ENCODE measurements at regions of chr4 and their contacts with region 1.

Region 1: GRCh38 chr4:74117024-74117534 is 18.1 kb upstream of the CXCL2 start:
- DNase-seq: peak; percentile 96
- H3K4me3 Mint-ChIP-seq: peak overlapping the region; percentile 88
- H3K27ac Mint-ChIP-seq: peak overlapping the region; percentile 99
- H3K4me1 Mint-ChIP-seq: peaks cover 44% of the 10 kb centered on the region
- H3K27me3 Mint-ChIP-seq: no peaks in the 10 kb centered on the region
- CTCF ChIP-seq: no peak

Region 2: DNA sequence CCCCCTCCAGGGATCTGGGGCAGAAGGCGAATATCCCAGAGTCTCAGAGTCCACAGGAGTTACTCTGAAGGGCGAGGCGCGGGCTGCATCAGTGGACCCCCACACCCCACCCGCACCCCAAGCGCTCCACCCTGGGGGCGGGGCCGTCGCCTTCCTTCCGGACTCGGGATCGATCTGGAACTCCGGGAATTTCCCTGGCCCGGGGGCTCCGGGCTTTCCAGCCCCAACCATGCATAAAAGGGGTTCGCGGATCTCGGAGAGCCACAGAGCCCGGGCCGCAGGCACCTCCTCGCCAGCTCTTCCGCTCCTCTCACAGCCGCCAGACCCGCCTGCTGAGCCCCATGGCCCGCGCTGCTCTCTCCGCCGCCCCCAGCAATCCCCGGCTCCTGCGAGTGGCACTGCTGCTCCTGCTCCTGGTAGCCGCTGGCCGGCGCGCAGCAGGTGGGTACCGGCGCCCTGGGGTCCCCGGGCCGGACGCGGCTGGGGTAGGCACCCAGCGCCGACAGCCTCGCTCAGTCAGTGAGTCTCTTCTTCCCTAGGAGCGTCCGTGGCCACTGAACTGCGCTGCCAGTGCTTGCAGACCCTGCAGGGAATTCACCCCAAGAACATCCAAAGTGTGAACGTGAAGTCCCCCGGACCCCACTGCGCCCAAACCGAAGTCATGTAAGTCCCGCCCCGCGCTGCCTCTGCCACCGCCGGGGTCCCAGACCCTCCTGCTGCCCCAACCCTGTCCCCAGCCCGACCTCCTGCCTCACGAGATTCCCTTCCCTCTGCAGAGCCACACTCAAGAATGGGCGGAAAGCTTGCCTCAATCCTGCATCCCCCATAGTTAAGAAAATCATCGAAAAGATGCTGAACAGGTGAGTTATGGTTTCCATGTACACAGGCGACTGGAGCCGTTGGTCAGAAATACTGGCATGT is 247.7 kb before region 1 on chr4 and contains the start of gene CXCL1:
- CTCF ChIA-PET with region 1: interaction called, 11 read pairs
- POLR2A ChIA-PET with region 1: interaction called, 32 read pairs
- intact Hi-C with region 1: loop called (anchors 5 kb)
- DNase-seq: peak; percentile 74
- H3K4me3 Mint-ChIP-seq: peak within 1 kb of the TSS; percentile 95
- H3K27ac Mint-ChIP-seq: peak within 1 kb of the TSS; percentile 92
- H3K4me1 Mint-ChIP-seq: peaks cover 37% of the 10 kb centered on the region
- H3K27me3 Mint-ChIP-seq: no peaks in the 10 kb centered on the region
- CTCF ChIP-seq: no peak
- total RNA-seq, gene CXCL1: 35.0 and 49.3 TPM in 2 replicates

Region 3: GRCh38 chr4:74056858-74057562 is 60.1 kb before region 1 on chr4:
- CTCF ChIA-PET with region 1: interaction called, 3 read pairs
- POLR2A ChIA-PET with region 1: interaction called, 13 read pairs
- intact Hi-C with region 1: loop called (anchors 5 kb)
- DNase-seq: peak; percentile 70
- H3K4me3 Mint-ChIP-seq: no peak overlapping the region
- H3K27ac Mint-ChIP-seq: peak overlapping the region; percentile 53
- H3K4me1 Mint-ChIP-seq: peaks cover 19% of the 10 kb centered on the region
- H3K27me3 Mint-ChIP-seq: no peaks in the 10 kb centered on the region
- CTCF ChIP-seq: no peak

Region 4: DNA sequence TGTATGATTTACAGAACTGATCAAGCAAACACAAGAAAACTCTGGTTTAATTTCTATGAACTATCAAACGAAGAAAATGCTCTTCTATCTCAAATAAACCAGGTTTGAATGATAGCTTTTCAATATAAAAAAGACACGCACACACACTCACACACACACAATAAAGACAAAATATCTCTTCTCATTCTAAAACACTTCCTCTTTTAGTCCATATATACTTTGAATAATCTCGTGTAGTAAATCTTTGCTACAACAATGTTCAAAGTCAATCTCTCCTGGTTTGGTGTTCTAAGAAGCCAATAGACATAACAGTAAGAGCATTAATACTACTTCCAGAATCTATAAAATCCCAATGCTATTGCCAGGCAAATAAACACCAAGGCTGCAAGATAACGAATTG is 31.4 kb before region 1 on chr4:
- CTCF ChIA-PET with region 1: no interaction called
- POLR2A ChIA-PET with region 1: no interaction called
- intact Hi-C with region 1: no loop called
- DNase-seq: no peak
- H3K4me3 Mint-ChIP-seq: no peak overlapping the region
- H3K27ac Mint-ChIP-seq: no peak overlapping the region
- H3K4me1 Mint-ChIP-seq: no peaks in the 10 kb centered on the region
- H3K27me3 Mint-ChIP-seq: no peaks in the 10 kb centered on the region
- CTCF ChIP-seq: no peak